ENCODE measurements at regions of chr18 and their contacts with region 1.

Region 1: GRCh38 chr18:54269893-54270844 is 852 bp downstream of the POLI start:
- DNase-seq: peak; percentile 71
- H3K4me3 ChIP-seq: peak overlapping the region; percentile 50 to 61 (median 52)
- H3K27ac ChIP-seq: peak overlapping the region; percentile 90
- H3K4me1 ChIP-seq: peaks cover 10% of the 10 kb centered on the region
- H3K27me3 ChIP-seq: no peaks in the 10 kb centered on the region
- CTCF ChIP-seq: peak; percentile 37 to 66

Region 2: DNA sequence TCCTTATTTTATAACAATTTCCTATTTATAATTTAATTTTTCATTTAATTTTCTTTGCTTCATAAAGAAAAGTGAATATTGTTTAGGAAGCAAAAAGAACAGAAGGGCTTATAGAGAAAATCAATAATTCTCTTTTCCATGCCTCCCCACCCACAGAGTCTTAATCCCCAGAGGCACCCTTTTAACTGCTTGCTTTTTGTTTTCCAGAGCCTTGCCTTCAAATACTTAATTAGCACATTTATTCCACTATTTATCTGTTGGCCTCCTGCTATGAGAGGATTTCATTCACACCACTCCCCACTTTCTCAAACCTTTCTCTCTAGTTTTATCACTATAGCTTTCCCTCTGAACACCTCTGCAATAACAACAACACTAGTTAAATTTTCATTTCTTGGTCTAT is 419.3 kb before region 1 on chr18:
- CTCF ChIA-PET with region 1: no interaction called
- dilution Hi-C with region 1: no loop called
- in situ Hi-C with region 1: no loop called
- intact Hi-C with region 1: no loop called
- DNase-seq: no peak
- H3K4me3 ChIP-seq: no peak overlapping the region
- H3K27ac ChIP-seq: no peak overlapping the region
- H3K4me1 ChIP-seq: no peaks in the 10 kb centered on the region
- H3K27me3 ChIP-seq: no peaks in the 10 kb centered on the region
- CTCF ChIP-seq: no peak

Region 3: GRCh38 chr18:54127759-54128378 is 142.3 kb before region 1 on chr18:
- CTCF ChIA-PET with region 1: no interaction called
- dilution Hi-C with region 1: no loop called
- in situ Hi-C with region 1: no loop called
- intact Hi-C with region 1: no loop called
- DNase-seq: no peak
- H3K4me3 ChIP-seq: no peak overlapping the region
- H3K27ac ChIP-seq: no peak overlapping the region
- H3K4me1 ChIP-seq: peaks cover 11% of the 10 kb centered on the region
- H3K27me3 ChIP-seq: no peaks in the 10 kb centered on the region
- CTCF ChIP-seq: peak; percentile 63 to 64

Region 4: DNA sequence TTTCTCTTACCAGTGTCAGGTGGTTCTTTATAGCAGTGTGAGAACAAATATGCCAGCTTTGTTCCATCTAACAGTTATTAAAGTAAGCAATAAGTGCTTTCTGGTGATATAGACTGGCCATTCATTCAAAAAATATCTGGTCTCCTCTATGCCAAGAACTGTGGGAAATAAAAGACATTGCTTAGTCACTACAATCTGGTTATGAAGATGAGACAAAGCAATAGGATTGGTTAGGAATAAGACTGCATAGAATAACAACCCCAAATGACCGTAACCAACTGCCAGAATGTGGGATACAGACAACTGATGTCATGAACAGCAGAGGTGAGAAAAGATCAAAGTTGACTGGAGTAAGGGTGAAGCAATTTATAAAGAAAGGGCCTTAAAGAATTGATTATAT is 129.5 kb before region 1 on chr18:
- CTCF ChIA-PET with region 1: no interaction called
- dilution Hi-C with region 1: no loop called
- in situ Hi-C with region 1: no loop called
- intact Hi-C with region 1: loop called (anchors 5 kb)
- DNase-seq: no peak
- H3K4me3 ChIP-seq: no peak overlapping the region
- H3K27ac ChIP-seq: no peak overlapping the region
- H3K4me1 ChIP-seq: no peaks in the 10 kb centered on the region
- H3K27me3 ChIP-seq: no peaks in the 10 kb centered on the region
- CTCF ChIP-seq: no peak

Region 5: GRCh38 chr18:54162431-54162830 is 107.7 kb before region 1 on chr18:
- CTCF ChIA-PET with region 1: no interaction called
- dilution Hi-C with region 1: no loop called
- in situ Hi-C with region 1: no loop called
- intact Hi-C with region 1: loop called (anchors 5 kb)
- DNase-seq: peak; percentile 49
- H3K4me3 ChIP-seq: no peak overlapping the region
- H3K27ac ChIP-seq: no peak overlapping the region
- H3K4me1 ChIP-seq: peaks cover 34% of the 10 kb centered on the region
- H3K27me3 ChIP-seq: no peaks in the 10 kb centered on the region
- CTCF ChIP-seq: no peak

Region 6: DNA sequence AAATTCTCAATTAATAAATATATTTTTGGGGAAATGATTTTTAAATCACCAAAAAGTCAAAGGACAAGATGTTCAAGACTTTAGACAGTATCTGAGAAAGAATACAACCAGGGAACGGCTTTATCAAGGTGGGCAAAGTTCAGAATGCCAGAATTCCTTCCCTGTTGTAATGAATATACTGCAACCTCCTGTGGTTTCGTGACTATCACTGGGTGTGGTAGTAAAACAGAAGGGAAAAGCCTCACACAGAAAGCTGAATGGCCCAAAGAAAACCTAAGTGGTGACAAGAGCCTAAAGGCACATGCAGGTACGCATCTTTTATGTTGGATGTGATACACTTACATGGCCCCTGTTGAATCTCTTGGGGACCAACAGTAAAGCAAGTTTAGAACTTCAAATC is 82.8 kb before region 1 on chr18:
- CTCF ChIA-PET with region 1: no interaction called
- dilution Hi-C with region 1: no loop called
- in situ Hi-C with region 1: no loop called
- intact Hi-C with region 1: no loop called
- DNase-seq: no peak
- H3K4me3 ChIP-seq: no peak overlapping the region
- H3K27ac ChIP-seq: no peak overlapping the region
- H3K4me1 ChIP-seq: peaks cover 15% of the 10 kb centered on the region
- H3K27me3 ChIP-seq: no peaks in the 10 kb centered on the region
- CTCF ChIP-seq: no peak

Region 7: DNA sequence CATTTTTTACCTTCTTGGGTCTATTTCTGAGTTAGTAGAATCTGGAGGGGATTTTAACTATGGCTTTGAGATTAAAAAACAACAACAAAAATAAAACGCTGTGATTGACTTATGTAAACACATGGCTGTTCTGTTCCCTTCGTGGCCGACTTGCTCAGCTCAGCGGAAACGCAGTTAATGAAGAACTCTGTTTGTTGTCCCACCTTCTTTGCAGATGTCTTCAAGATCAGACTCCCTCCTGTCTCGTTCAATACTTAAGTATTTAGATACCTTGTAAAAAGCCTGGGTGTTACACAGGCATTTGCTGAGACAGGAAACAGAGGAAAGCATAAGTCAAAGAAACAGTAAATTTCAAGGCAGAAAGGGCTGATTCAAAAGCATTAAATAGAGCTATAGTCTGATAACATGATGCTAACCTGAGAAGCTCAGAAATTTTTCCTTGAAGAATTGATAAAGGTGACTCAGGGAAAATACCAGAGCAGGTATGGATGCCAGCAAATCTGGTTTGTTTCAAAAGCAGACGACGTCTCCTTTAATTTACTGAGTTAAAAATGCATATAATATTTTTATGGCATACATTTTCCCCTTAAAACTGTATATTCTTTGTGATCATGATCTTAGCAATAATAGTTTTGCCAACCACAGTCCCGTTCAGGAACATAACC is 22.5 kb before region 1 on chr18:
- CTCF ChIA-PET with region 1: no interaction called
- dilution Hi-C with region 1: no loop called
- in situ Hi-C with region 1: no loop called
- intact Hi-C with region 1: loop called (anchors 1 kb)
- DNase-seq: peak; percentile 29
- H3K4me3 ChIP-seq: no peak overlapping the region
- H3K27ac ChIP-seq: peak overlapping the region; percentile 84
- H3K4me1 ChIP-seq: peaks cover 20% of the 10 kb centered on the region
- H3K27me3 ChIP-seq: no peaks in the 10 kb centered on the region
- CTCF ChIP-seq: no peak